Activated CD4-positive, alpha-beta T cell treated with anti-CD3 and anti-CD28 coated beads for 36 hours (primary cell): ENCODE measurements at regions of chrX and their contacts with region 1.

Region 1: DNA sequence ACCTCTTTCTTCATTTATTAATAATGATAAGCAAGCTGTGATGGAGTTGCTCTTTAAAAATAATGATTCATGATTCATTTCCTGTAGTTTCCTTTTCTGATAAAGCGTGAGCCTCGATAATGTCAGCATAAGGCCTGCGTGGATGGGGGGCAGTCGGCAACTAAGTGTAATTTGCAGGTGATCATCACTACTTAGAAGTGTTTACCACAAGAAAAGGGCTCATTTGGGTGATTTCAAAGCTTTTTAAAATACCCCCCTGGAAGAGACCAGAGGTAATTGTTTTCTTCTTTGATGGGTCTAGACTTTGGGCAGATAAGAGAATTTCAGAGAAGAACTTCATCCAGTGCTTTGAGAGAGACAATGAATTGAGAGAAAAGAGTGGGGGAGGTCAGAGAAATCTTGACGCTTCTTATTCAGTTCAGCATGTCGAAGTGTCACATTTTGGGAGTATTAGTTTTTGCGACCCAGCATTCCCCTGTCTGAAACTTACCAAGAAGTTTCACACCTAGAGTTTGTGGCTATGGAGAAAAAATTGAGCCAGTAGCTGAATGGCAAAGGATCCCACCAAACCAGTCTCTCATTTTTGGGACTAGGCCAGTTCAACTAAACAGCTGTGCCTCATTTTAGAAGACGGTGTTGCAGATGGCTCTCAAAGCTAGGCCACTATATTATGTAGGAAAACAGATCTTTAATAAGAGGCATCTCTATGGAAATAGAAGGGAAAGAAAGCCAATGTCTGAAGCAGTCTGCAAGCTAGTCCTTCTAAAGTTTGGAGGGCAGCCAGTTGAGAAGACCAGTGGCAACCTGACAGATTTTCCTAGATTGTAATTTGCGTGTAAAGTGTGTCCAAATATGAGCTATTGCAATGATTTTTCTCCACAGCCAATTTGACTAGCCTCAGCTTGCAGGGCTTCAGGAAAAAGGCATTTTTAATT is 171.0 kb upstream of the PPP1R2C start:
- DNase-seq: no peak
- ATAC-seq: no peak
- H3K4me3 Mint-ChIP-seq: no peak overlapping the region
- H3K27ac Mint-ChIP-seq: peak overlapping the region; percentile 69
- H3K4me1 Mint-ChIP-seq: peaks cover 57% of the 10 kb centered on the region
- H3K27me3 Mint-ChIP-seq: no peaks in the 10 kb centered on the region

Region 2: GRCh38 chrX:41917517-41917916 is 1031.5 kb before region 1 on chrX:
- CTCF ChIA-PET with region 1: no interaction called
- POLR2A ChIA-PET with region 1: no interaction called
- intact Hi-C with region 1: loop called in 1 of 2 experiments (anchors 5 kb)
- DNase-seq: no peak
- ATAC-seq: no peak
- H3K4me3 Mint-ChIP-seq: peak overlapping the region; percentile 48
- H3K27ac Mint-ChIP-seq: peak overlapping the region; percentile 65
- H3K4me1 Mint-ChIP-seq: peaks cover 58% of the 10 kb centered on the region
- H3K27me3 Mint-ChIP-seq: no peaks in the 10 kb centered on the region

Region 3: DNA sequence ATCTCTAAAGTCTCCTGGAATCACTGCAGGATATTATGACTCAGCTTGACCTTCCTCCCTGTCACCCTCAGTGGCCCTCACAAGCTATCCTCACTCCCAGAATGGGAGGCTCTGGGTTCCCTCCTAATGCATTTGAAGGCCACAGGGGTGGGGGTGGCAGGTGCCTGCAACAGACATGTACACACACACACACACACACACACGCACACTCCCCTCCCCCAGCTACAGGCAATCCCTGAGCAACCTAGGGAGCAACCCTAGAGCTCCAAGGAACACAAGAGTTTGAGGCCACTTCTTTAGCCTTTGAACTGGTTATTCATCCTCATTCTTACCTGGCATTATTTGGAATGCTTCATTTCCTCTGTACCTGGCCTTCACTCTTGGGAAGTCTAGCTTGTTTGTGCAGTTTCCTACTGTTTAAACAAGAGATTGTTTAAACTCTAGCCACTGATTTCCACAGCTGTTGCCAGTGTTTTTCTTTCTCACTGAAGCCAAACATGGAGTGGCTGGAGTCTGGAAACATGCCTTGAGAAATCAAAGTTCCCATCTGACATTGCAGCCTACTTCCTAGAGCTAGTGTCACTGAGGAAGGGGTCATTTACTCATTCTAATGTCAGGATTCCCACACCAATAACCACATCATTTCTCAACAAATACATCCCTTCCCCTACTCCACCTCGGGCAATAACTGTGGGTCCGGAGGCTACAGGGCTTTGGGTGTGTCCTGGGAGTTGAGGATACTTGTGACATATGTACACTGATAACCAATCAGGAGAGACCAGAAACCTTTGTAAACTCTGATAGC is 744.8 kb after region 1 on chrX:
- CTCF ChIA-PET with region 1: no interaction called
- POLR2A ChIA-PET with region 1: no interaction called
- intact Hi-C with region 1: no loop called
- DNase-seq: no peak
- ATAC-seq: no peak
- H3K4me3 Mint-ChIP-seq: no peak overlapping the region
- H3K27ac Mint-ChIP-seq: no peak overlapping the region
- H3K4me1 Mint-ChIP-seq: no peaks in the 10 kb centered on the region
- H3K27me3 Mint-ChIP-seq: no peaks in the 10 kb centered on the region